ENCODE measurements at regions of chr6 and their contacts with region 1.

Region 1: DNA sequence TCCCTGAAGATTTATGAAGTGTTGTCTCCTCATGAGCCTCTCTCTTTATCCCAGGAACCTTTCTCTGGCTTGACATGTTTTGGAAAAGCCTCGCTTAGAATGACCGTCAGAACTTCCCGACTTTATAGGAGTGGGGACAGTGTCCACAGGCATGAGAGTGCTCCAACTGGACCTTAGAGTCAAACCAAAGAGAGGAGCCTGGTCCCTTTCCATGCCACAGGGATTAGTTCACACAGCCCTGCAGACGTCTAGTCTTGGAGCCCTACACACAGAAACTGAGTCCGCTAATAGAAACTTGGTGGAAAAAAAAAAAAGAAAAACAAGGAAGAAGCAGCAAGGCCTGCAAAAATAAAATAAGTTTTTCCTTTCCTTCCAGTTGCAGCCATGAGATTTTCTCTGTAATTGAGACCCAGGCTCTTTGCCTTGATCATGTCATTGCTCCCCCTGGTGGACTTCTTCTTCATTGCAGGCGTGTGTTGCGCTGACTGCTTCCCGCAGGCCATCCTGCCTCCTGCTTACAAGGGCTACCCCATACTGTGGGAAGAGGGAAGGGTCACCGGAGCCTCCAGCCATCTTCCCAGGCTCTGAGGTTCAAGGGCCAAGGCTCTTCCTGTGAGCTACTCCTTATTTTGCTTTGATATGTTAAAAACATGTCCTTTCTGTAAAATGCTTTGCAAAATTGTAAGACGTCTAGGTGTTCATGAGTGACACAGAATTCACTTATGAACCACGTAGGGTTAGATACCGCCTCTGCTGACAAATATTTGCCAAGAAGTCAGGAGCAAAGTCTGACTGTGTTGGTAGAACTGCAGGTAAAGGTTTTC is 201.0 kb downstream of the UST start:
- DNase-seq: peak; percentile 74
- H3K4me3 Mint-ChIP-seq: no peak overlapping the region
- H3K27ac Mint-ChIP-seq: no peak overlapping the region
- H3K4me1 Mint-ChIP-seq: no peaks in the 10 kb centered on the region
- H3K27me3 Mint-ChIP-seq: peaks cover 18% of the 10 kb centered on the region
- CTCF ChIP-seq: peak; percentile 82

Region 2: GRCh38 chr6:148559848-148560433 is 387.9 kb before region 1 on chr6:
- CTCF ChIA-PET with region 1: no interaction called
- intact Hi-C with region 1: loop called (anchors 5 kb)
- DNase-seq: peak; percentile 79
- H3K4me3 Mint-ChIP-seq: peak overlapping the region; percentile 58
- H3K27ac Mint-ChIP-seq: no peak overlapping the region
- H3K4me1 Mint-ChIP-seq: no peaks in the 10 kb centered on the region
- H3K27me3 Mint-ChIP-seq: no peaks in the 10 kb centered on the region
- CTCF ChIP-seq: peak; percentile 81

Region 3: DNA sequence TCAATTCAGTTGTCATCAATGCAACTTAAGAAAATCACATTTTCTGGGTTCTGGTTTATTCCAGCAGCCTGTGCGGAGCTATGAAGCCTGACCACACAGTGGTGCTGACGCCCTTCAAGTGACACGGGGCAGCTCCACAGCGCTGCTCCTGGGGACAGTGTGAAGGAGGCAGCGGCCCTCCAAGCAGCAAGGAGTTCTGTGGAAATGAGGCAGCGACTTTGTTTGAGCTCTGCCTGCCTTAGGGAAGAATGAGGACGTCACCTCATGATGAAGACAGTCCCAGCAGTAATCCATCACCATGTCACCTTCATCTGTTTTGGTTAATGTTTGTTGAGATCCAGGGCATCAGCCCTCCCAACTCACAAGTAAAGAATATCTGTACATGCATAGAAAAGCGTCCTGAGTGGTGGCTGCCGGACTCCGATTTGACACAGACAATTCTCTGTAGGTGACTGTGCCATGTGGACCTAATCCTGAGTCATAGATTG is 369.5 kb before region 1 on chr6:
- CTCF ChIA-PET with region 1: interaction called, 3 read pairs
- intact Hi-C with region 1: loop called (anchors 1 kb)
- DNase-seq: peak; percentile 66
- H3K4me3 Mint-ChIP-seq: no peak overlapping the region
- H3K27ac Mint-ChIP-seq: no peak overlapping the region
- H3K4me1 Mint-ChIP-seq: no peaks in the 10 kb centered on the region
- H3K27me3 Mint-ChIP-seq: no peaks in the 10 kb centered on the region
- CTCF ChIP-seq: peak; percentile 47

Region 4: DNA sequence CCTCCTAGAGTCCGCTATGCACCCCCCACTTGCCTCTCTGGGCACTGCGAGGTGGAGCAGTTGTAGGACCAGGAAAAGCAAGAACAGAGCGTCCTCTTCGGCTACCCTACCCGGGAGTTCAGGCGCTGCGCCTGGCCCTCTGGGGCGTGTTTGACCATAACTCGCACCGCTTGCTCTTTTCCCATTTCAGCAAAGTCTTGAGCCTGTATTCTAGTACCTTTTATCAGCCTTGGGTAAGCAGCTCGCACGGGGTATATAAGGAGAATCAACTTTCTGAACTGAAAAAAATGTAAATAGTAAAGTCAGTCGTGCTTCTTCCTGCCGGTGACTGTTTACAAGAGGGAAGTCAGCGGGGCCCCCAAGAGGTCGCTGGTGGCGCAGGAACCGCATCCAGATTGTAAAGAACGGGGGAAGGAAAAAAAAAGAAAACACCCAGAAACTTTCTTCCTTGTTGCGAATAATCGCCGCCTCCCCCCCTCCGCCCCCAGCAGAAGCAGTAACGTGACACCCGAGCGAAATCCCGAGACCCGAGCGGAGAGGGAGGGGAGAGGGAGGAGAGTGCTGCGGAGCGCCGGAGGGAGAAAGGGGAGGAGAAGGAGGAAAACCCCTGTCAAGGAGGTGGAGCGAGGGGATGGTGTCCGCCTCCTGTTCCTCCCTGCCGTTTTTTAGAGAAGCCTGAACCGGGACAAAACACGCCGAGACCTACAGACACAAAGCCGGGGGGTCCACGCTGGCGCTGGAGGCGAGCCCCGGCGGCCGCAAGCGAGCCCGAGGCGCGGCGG is 201.3 kb before region 1 on chr6 and contains the start of gene UST:
- CTCF ChIA-PET with region 1: no interaction called
- intact Hi-C with region 1: loop called (anchors 1 kb)
- DNase-seq: peak; percentile 60
- H3K4me3 Mint-ChIP-seq: peak within 1 kb of the TSS; percentile 90
- H3K27ac Mint-ChIP-seq: peak within 1 kb of the TSS; percentile 71
- H3K4me1 Mint-ChIP-seq: peaks cover 39% of the 10 kb centered on the region
- H3K27me3 Mint-ChIP-seq: peaks cover 16% of the 10 kb centered on the region
- CTCF ChIP-seq: no peak
- total RNA-seq, gene UST: 2.4 TPM in 2 replicates

Measured in Calu3 (cell line).